ENCODE measurements at regions of chr12 and their contacts with region 1.

Region 1: DNA sequence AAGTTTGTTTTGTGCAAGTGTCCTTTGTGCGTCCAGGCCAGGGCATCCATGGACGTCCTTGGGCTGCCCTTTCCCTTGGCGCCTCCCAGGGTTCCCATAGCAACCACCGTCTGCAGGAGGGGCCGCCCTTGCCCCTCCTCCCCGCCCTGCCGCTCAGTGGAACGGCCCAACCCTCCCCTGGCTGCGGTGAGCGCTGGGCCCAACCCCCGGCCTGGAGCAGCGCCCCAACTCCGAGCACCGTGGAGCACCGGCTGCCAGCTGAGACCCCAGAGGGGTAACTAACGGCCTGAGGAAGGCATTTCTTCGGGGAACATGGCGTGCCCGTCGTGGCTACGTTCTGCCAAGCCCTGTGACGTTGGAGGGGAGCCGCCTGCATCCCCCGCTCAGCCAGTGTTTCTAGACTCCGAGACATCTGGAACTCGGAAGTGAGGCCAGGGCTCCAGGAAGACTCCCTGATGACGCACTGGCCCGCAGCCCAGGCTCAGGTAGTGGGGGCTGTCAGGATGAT is 5.3 kb upstream of the ACACB start:
- DNase-seq: peak; percentile 83 to 84
- H3K4me3 ChIP-seq: peak overlapping the region; percentile 62
- H3K4me3 Mint-ChIP-seq: peak overlapping the region; percentile 71
- H3K27ac Mint-ChIP-seq: peak overlapping the region; percentile 54
- H3K4me1 ChIP-seq: peaks cover 8% of the 10 kb centered on the region; the same call in 1 of the 2 replicates
- H3K4me1 Mint-ChIP-seq: peaks cover 6% of the 10 kb centered on the region
- H3K27me3 ChIP-seq: no peaks in the 10 kb centered on the region
- H3K27me3 Mint-ChIP-seq: no peaks in the 10 kb centered on the region
- CTCF ChIP-seq: no peak

Region 2: GRCh38 chr12:108846290-108846701 is 264.7 kb before region 1 on chr12:
- CTCF ChIA-PET with region 1: no interaction called
- POLR2A ChIA-PET with region 1: no interaction called
- intact Hi-C with region 1: no loop called
- DNase-seq: no peak
- H3K4me3 ChIP-seq: no peak overlapping the region
- H3K4me3 Mint-ChIP-seq: no peak overlapping the region
- H3K27ac Mint-ChIP-seq: no peak overlapping the region
- H3K4me1 ChIP-seq: peaks cover 13% of the 10 kb centered on the region
- H3K4me1 Mint-ChIP-seq: peaks cover 21% of the 10 kb centered on the region
- H3K27me3 ChIP-seq: no peaks in the 10 kb centered on the region
- H3K27me3 Mint-ChIP-seq: no peaks in the 10 kb centered on the region
- CTCF ChIP-seq: no peak

Region 3: DNA sequence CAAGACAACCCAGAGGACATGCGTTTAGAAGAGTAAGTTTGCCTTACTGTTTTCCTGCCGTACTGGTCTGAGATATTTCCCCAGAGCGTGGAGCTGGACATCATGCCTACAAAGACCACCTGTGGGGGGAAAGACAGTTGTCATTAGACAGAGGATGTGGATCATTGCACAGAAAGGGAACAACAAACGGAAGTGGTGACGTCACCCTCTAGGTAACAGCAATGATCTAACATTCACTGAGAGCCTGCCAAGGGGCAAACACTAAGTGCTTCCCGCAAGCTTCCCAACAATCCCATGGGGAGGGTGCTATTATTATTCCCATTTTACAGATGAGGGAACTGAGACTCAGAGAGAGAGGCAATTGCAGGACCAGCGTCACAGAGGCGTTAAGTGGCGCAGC is 138.7 kb before region 1 on chr12:
- CTCF ChIA-PET with region 1: no interaction called
- POLR2A ChIA-PET with region 1: no interaction called
- intact Hi-C with region 1: no loop called
- DNase-seq: no peak
- H3K4me3 ChIP-seq: no peak overlapping the region
- H3K4me3 Mint-ChIP-seq: no peak overlapping the region
- H3K27ac Mint-ChIP-seq: no peak overlapping the region
- H3K4me1 ChIP-seq: no peaks in the 10 kb centered on the region
- H3K4me1 Mint-ChIP-seq: no peaks in the 10 kb centered on the region
- H3K27me3 ChIP-seq: no peaks in the 10 kb centered on the region
- H3K27me3 Mint-ChIP-seq: no peaks in the 10 kb centered on the region
- CTCF ChIP-seq: no peak

Region 4: GRCh38 chr12:109154451-109155438 is 43.7 kb after region 1 on chr12:
- CTCF ChIA-PET with region 1: interaction called, 4 read pairs
- POLR2A ChIA-PET with region 1: interaction called, 13 read pairs
- intact Hi-C with region 1: loop called (anchors 2 kb)
- DNase-seq: peak; percentile 90 to 92
- H3K4me3 ChIP-seq: peak overlapping the region; percentile 39
- H3K4me3 Mint-ChIP-seq: peak overlapping the region; percentile 83
- H3K27ac Mint-ChIP-seq: peak overlapping the region; percentile 31
- H3K4me1 ChIP-seq: peaks cover 4% of the 10 kb centered on the region; the same call in 1 of the 2 replicates
- H3K4me1 Mint-ChIP-seq: no peaks in the 10 kb centered on the region
- H3K27me3 ChIP-seq: no peaks in the 10 kb centered on the region
- H3K27me3 Mint-ChIP-seq: no peaks in the 10 kb centered on the region
- CTCF ChIP-seq: no peak

Region 5: DNA sequence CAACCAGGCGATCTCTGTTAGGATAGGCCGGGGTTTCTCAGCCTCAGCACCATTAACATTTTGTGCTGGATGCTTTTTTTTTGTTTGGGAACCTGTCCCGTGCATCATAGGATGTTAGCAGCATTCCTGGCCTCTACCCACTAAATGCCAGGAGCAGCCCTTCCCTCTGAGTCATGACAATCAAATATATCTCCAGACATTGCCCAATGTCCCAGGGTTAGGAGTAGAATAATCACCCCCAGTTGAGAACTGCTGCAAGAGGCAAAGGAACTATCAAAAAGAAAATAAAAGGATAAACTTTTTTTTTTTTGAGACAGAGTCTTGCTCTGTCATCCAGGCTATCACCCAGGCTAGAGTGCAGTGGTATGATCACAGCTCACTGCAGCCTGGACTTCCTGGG is 81.3 kb after region 1 on chr12:
- CTCF ChIA-PET with region 1: no interaction called
- POLR2A ChIA-PET with region 1: no interaction called
- intact Hi-C with region 1: loop called (anchors 10 kb)
- DNase-seq: no peak
- H3K4me3 ChIP-seq: no peak overlapping the region
- H3K4me3 Mint-ChIP-seq: no peak overlapping the region
- H3K27ac Mint-ChIP-seq: no peak overlapping the region
- H3K4me1 ChIP-seq: peaks cover 4% of the 10 kb centered on the region
- H3K4me1 Mint-ChIP-seq: no peaks in the 10 kb centered on the region
- H3K27me3 ChIP-seq: no peaks in the 10 kb centered on the region
- H3K27me3 Mint-ChIP-seq: no peaks in the 10 kb centered on the region
- CTCF ChIP-seq: no peak

Region 6: DNA sequence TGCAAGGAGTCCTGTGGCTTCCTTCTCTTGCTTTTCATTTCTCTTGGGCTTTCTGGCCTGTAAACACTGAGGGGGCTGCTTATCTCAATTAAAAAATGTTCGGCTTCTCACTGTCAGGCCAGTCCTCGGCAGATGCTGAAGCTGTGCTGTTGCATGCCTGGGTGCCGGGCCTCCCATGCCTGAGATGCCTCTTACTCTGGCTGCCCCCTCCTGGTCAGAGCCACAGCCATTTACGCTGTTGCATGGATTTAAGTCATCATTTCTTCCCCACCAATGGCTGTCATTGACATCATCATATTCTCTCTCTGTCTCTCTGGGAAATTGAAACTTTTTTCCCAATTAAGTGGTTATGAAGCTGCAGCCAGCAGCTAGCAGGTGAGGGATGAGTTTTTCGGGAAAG is 144.3 kb after region 1 on chr12:
- CTCF ChIA-PET with region 1: interaction called, 6 read pairs
- POLR2A ChIA-PET with region 1: no interaction called
- intact Hi-C with region 1: loop called (anchors 10 kb)
- DNase-seq: peak in 1 of 2 experiments; percentile 43
- H3K4me3 ChIP-seq: no peak overlapping the region
- H3K4me3 Mint-ChIP-seq: no peak overlapping the region
- H3K27ac Mint-ChIP-seq: no peak overlapping the region
- H3K4me1 ChIP-seq: no peaks in the 10 kb centered on the region
- H3K4me1 Mint-ChIP-seq: no peaks in the 10 kb centered on the region
- H3K27me3 ChIP-seq: no peaks in the 10 kb centered on the region
- H3K27me3 Mint-ChIP-seq: no peaks in the 10 kb centered on the region
- CTCF ChIP-seq: peak in 1 of 2 experiments; percentile 9

Region 7: DNA sequence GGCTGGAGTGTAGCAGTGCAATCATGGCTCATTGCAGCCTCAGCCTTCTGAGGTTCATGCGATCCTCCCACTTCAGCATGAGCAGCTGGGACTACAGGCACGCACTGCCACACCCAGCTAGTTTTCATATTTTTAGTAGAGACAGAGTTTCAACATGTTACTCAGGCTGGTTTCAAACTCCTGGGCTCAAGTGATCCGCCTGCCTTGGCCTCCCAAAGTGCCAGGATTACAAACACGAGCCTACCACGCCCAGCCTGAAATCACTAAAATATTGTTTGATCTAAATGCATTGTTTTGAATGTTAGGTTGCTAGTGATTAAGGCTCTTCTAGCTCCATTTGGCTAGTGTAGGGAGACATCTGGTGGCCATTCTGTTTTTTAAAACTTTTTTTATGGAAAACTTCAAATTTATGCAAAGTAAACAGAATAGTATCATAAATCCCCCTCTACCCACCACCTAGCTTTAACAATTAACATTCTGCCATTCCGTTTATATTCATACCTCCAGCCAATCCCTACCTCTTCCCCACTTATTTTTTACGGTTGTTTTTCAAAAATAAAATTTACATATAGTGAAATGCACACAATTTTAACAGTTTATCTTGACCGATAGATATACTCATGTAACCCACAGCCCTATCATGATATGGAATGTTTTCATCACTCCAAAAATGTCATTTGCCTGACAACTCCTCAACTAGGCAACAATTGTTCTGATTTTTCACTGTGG is 274.5 kb after region 1 on chr12:
- CTCF ChIA-PET with region 1: no interaction called
- POLR2A ChIA-PET with region 1: no interaction called
- intact Hi-C with region 1: loop called (anchors 10 kb)
- DNase-seq: peak in 1 of 2 experiments; percentile 47
- H3K4me3 ChIP-seq: no peak overlapping the region
- H3K4me3 Mint-ChIP-seq: no peak overlapping the region
- H3K27ac Mint-ChIP-seq: no peak overlapping the region
- H3K4me1 ChIP-seq: 0 out of 2 replicates have a peak, but pooled peaks cover 5% of the 10 kb centered on the region
- H3K4me1 Mint-ChIP-seq: no peaks in the 10 kb centered on the region
- H3K27me3 ChIP-seq: 0 out of 2 replicates have a peak, but pooled peaks cover 1% of the 10 kb centered on the region
- H3K27me3 Mint-ChIP-seq: peaks cover 11% of the 10 kb centered on the region
- CTCF ChIP-seq: peak; percentile 49 to 62